Activated CD4-positive, alpha-beta memory T cell treated with anti-CD3 and anti-CD28 coated beads for 36 hours (primary cell): ENCODE measurements at regions of chr16 and their contacts with region 1.

Region 1: DNA sequence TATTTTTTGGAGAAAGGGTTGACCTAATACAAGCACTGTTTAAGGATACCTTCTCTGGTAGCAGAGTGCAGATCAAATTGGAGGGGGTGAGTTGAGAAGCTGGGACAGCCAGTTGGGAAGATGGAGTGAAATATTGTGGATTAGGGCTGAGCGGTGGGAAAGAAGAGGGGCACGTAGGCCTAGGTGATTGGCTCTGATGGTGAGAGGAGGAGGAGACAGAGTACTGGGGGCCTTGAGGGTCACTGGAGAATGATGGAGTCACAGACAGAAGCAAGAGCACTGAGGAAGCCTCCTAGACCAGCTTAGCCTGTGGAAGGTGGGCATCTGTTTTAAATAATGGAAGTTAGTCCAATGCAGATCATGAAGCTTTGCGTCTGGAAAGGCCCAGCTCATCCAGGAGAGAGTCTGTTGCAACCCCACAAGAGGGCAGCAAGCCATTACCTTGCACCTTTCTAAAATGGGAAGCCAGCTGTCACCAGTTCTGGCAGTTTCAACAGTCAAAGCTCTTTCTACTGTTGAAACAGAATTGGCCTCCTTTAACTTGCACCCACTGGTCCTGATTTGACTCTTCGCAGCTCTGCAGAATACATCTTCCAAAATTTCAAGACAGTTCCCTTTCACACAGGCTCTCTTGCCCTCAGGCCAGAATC is 11.8 kb downstream of the SLC9A5 start:
- DNase-seq: peak; percentile 55
- H3K4me3 Mint-ChIP-seq: no peak overlapping the region
- H3K27ac Mint-ChIP-seq: no peak overlapping the region
- H3K4me1 Mint-ChIP-seq: peaks cover 3% of the 10 kb centered on the region
- H3K27me3 Mint-ChIP-seq: peaks cover 16% of the 10 kb centered on the region

Region 2: GRCh38 chr16:67006930-67007658 is 253.5 kb before region 1 on chr16:
- CTCF ChIA-PET with region 1: no interaction called
- POLR2A ChIA-PET with region 1: no interaction called
- intact Hi-C with region 1: no loop called
- DNase-seq: peak; percentile 47
- H3K4me3 Mint-ChIP-seq: no peak overlapping the region
- H3K27ac Mint-ChIP-seq: peak overlapping the region; percentile 58
- H3K4me1 Mint-ChIP-seq: peaks cover 34% of the 10 kb centered on the region
- H3K27me3 Mint-ChIP-seq: no peaks in the 10 kb centered on the region

Region 3: DNA sequence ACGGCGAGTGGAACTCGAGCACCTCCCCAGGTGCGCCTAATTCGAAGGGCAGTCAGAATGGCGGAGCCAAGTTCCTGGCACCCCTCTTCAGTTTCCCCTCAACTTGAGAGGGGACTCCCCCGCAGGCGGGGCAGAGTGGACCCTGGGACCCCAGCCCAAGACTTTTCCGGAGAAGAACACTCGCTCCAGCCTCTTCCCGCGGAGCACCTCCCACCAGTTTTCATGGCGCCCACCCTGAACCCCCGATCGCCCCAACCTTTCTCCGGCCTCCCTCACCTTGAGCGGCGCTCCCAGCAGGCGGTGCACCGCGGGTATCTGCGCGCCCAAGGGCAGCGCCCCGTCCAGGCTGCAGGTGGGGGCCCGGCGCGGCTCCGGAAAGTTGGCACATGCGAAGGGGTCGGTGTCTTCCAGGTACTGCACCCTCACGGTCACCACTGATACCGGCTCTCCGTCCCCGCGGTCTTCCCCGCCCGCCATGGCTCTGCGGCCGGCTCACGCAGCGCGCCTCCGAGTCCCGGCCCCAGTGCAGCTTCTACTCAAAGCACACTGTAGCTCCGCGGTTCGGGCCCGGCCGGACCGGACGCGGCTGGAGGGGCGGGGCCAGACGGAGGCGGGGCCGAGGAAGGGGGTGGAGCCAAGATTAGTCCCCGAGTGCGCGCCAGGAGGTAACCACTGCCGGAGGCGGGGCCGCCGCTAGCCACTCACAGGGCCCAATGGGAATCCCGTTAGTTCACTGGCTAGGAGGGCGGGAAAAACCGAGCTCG is 13.4 kb before region 1 on chr16 and contains the start of gene FHOD1:
- CTCF ChIA-PET with region 1: interaction called, 14 read pairs
- POLR2A ChIA-PET with region 1: no interaction called
- intact Hi-C with region 1: no loop called
- DNase-seq: peak; percentile 99
- H3K4me3 Mint-ChIP-seq: peak within 1 kb of the TSS; percentile 90
- H3K27ac Mint-ChIP-seq: peak within 1 kb of the TSS; percentile 86
- H3K4me1 Mint-ChIP-seq: peaks cover 47% of the 10 kb centered on the region
- H3K27me3 Mint-ChIP-seq: peaks cover 1% of the 10 kb centered on the region
- total RNA-seq, gene FHOD1: 96.3 to 111 TPM

Region 4: GRCh38 chr16:67399181-67399733 is 138.7 kb after region 1 on chr16:
- CTCF ChIA-PET with region 1: interaction called, 36 read pairs
- POLR2A ChIA-PET with region 1: no interaction called
- intact Hi-C with region 1: loop called (anchors 5 kb)
- DNase-seq: peak; percentile 65
- H3K4me3 Mint-ChIP-seq: no peak overlapping the region
- H3K27ac Mint-ChIP-seq: no peak overlapping the region
- H3K4me1 Mint-ChIP-seq: peaks cover 1% of the 10 kb centered on the region
- H3K27me3 Mint-ChIP-seq: peaks cover 14% of the 10 kb centered on the region

Region 5: DNA sequence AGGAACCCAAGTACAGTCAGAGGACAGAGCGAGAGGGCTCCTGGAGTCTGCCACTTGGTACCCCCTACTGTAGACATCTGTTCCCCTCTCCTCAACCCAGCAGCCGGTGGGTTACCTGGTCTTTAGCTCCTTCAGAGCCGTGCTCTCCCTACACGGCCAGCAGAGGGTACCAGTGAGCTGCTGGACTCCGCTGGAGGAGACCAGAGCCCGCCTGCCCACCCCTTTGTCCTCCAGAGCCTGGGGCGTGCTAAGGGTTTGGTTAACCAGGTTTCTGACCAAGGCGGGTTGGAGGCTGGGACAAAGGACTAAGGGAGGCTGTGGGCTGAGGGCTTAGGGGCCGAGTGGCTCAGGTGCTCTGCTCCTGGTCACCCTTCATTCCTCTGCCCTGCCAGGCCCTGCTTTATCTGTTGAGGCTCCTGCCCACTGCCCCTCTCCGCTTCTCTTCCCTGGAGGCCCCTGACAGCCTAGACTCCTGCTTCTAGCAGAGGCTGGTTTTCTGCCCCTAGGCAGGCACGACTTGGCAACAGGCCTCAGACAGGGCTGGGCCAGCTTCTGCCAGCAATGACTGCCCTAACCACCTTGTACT is 167.7 kb after region 1 on chr16:
- CTCF ChIA-PET with region 1: interaction called, 13 read pairs
- POLR2A ChIA-PET with region 1: no interaction called
- intact Hi-C with region 1: no loop called
- DNase-seq: peak; percentile 76
- H3K4me3 Mint-ChIP-seq: no peak overlapping the region
- H3K27ac Mint-ChIP-seq: no peak overlapping the region
- H3K4me1 Mint-ChIP-seq: peaks cover 10% of the 10 kb centered on the region
- H3K27me3 Mint-ChIP-seq: peaks cover 39% of the 10 kb centered on the region

Region 6: DNA sequence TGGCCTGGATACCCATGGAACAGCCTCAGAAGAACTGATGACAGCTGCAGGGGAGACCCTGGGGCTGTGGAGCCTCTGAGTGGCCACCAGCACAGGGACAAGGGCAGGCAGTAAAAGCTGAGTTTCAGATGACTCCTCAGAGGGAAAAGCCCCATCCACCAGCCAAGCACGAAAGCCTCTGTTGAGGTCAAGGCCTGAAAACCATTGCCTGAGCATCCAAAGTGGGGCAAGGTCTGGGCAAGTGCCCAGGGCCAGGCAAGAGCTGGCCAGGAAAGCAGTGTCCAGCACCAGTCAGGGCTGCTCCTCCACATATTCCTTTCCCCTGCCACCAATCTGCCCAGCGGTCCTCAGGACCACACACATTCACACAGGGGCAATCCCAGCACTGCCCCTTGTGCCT is 204.0 kb after region 1 on chr16:
- CTCF ChIA-PET with region 1: interaction called, 10 read pairs
- POLR2A ChIA-PET with region 1: no interaction called
- intact Hi-C with region 1: no loop called
- DNase-seq: no peak
- H3K4me3 Mint-ChIP-seq: no peak overlapping the region
- H3K27ac Mint-ChIP-seq: no peak overlapping the region
- H3K4me1 Mint-ChIP-seq: peaks cover 10% of the 10 kb centered on the region
- H3K27me3 Mint-ChIP-seq: no peaks in the 10 kb centered on the region